Stomach (tissue), 19 donors: ENCODE measurements at regions of chr1 and their contacts with region 1.

Region 1: GRCh38 chr1:231357831-231358354 is 19.8 kb downstream of the SPRTN start:
- DNase-seq: peak; percentile 33 to 80
- H3K4me3 ChIP-seq: no peak overlapping the region
- H3K27ac ChIP-seq: peak overlapping the region in 1 of 5 donors; percentile 44
- H3K4me1 ChIP-seq: peaks cover 6 to 26% (median 14%) of the 10 kb centered on the region in 4 donors
- H3K27me3 ChIP-seq: no peaks in the 10 kb centered on the region
- CTCF ChIP-seq: peak in 5 of 7 experiments; percentile 55 to 88 (median 65)
- EP300 ChIP-seq: no peak
- POLR2A ChIP-seq: no peak

Region 2: DNA sequence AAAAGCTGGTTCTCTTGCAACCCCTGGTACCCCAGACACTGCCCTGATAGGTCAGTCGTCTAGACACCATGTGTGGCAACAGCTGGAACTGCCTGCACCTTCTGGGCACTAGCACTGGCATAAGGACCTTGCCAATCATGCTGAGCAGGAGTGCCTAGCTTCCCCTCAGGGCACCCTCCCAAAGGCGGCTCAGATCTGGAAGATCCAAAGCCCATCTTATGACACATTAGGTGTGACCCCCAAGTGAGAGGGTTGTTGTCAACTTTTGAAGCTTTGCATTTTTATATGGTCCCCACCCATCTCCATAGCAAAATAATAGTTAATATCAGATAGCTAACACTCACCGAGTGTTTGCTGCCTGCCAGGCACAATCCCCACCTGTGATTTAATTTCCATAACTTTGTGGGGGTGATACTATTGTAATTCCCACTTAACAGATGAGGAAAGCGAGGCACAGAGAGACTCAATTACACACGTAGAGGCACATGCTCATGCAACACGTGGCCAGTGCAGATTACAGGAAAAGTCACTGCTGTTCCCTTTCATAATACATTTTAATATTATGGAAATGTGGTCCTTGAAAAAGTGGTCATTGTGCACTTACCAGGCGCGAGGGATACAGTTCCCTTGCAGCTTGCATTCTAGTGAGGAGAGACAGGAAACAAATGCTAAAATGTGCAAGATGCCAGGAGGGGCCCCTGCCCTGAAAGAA is 46.0 kb before region 1 on chr1:
- intact Hi-C with region 1: no loop called
- DNase-seq: no peak
- H3K4me3 ChIP-seq: no peak overlapping the region
- H3K27ac ChIP-seq: no peak overlapping the region
- H3K4me1 ChIP-seq: no peaks in the 10 kb centered on the region
- H3K27me3 ChIP-seq: no peaks in the 10 kb centered on the region
- CTCF ChIP-seq: no peak
- EP300 ChIP-seq: no peak
- POLR2A ChIP-seq: no peak

Region 3: GRCh38 chr1:231419738-231420298 is 61.9 kb after region 1 on chr1:
- intact Hi-C with region 1: loop called (anchors 10 kb)
- DNase-seq: peak in 1 of 2 donors; percentile 3
- H3K4me3 ChIP-seq: peak overlapping the region; percentile 77 to 86 (median 84)
- H3K27ac ChIP-seq: peak overlapping the region in 4 of 5 donors; percentile 97 to 99 (median 98)
- H3K4me1 ChIP-seq: peaks cover 37 to 67% (median 50%) of the 10 kb centered on the region in 4 donors
- H3K27me3 ChIP-seq: no peaks in the 10 kb centered on the region
- CTCF ChIP-seq: no peak
- EP300 ChIP-seq: no peak
- POLR2A ChIP-seq: no peak